ENCODE measurements at regions of chr15 and their contacts with region 1.

Region 1: DNA sequence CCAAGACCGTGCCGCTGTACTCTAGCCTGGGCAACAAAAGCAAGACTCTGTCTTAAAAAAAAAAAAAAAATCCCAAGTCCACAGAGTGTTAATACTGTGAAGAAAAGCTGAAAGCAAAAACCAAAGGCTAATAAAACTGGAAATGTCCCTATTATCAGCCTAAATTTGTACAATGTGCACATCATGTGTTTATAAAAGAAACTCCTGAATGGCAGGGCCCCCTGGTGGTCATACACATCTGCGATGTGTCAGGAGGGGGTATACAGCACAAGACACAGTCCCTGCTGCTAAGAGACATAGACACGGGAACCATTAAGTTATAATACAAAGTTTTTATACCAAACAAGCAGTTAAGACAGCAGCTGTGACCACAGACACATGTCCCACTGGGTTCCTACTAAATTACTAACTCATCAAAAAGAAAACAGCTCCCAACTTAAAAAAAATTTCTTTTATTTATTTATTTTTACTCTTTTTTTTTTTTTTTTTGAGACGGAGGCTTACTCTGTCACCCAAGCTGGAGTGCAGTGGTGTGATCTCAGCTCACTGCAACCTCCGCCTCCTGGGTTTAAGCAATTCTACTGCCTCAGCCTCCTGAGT is 31.0 kb downstream of the IDH2 start:
- DNase-seq: peak; percentile 21
- H3K4me3 ChIP-seq: no peak overlapping the region
- CTCF ChIP-seq: peak; percentile 80

Region 2: DNA sequence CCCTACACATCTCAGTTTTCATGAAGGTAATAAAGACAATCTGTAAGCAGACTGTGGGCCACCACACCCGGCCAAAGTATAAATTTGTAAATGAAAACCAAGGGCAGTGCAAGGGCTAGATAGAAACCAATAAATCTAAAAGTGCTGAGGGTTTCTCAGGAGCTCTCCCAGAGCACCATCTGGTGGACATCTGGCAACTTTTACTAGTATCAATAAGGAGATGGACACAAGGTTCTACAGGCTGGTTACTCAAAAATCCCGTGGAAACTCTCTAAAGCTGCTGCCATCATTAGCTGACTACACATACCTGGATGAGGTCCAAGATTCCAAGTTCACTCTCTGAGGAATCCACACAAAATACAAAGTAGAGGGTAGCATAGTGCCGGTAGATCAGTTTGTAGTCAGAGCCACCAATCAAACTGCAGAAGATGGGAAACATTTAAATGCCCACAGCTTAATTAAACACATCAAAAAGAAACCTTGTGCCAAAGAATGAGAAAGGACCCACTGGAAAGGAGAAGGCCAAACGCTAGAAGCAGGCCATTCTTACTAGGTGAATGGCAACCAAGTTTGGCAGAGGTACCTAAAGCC is 183.0 kb before region 1 on chr15:
- CTCF ChIA-PET with region 1: interaction called, 33 read pairs
- POLR2A ChIA-PET with region 1: no interaction called
- DNase-seq: peak; percentile 69
- H3K4me3 ChIP-seq: no peak overlapping the region
- CTCF ChIP-seq: peak; percentile 53

Region 3: DNA sequence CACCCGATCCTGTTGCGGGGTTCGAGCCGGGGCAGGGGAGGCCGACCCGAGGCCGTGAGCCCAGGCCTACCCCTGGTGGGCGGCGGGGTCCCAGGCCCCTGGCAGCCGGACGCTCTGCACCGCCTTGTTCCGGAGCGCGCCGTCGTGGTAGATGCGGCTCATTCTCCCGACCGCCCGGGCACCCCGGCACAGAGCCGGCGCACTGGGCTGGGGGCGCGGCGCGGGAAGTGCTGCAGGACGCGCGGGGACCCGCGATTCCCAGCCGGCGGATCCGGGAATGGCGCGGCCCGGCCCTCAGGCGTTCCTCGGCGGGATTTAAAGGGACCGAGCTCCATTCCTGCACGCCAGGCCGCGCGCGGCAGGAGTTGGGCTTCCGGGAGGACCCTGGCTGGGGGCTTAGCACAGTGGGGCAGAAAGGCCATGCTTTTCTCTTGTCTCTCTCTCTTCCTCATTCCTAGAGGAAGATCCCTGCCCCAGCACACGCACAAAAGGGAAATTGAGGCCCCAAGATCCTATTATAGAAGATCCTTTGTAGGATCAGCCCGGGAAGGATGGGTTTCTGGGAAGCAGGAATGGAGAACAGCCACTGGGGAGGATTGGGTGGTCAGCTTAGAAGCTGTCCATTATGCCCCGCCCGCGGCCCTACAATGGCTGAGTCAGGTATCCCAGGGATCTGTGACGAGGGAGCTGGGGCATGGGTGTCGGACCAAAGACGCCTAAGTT is 158.5 kb before region 1 on chr15 and contains the start of gene ARPIN:
- CTCF ChIA-PET with region 1: interaction called, 15 read pairs
- POLR2A ChIA-PET with region 1: no interaction called
- DNase-seq: no peak
- H3K4me3 ChIP-seq: peak within 1 kb of the TSS; percentile 71
- CTCF ChIP-seq: no peak

Region 4: DNA sequence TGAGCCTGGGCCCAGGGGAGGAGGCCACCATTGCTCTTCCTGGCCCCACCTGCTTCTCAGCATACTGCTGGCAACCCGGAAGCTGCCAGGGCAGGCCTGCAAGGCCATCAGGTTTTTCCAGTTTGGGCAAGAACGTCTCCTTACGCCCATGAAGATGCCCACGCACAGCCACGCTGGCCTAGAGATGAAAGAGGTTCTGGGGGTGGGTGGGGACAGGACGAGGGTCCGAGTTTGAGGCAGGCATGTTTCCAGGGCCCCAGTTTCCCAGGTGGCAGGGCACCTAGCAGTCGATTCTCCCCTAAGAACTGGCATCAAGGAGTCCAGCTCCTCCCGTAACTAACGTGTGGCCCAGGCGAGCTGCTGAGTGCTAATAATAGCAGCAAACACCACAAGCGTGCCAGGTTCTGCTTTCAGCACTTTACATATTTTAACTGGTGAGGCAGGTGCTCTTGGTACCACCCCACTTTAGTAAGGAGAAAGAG is 24.4 kb before region 1 on chr15:
- CTCF ChIA-PET with region 1: interaction called, 13 read pairs
- POLR2A ChIA-PET with region 1: no interaction called
- DNase-seq: no peak
- H3K4me3 ChIP-seq: no peak overlapping the region
- CTCF ChIP-seq: no peak

Region 5: DNA sequence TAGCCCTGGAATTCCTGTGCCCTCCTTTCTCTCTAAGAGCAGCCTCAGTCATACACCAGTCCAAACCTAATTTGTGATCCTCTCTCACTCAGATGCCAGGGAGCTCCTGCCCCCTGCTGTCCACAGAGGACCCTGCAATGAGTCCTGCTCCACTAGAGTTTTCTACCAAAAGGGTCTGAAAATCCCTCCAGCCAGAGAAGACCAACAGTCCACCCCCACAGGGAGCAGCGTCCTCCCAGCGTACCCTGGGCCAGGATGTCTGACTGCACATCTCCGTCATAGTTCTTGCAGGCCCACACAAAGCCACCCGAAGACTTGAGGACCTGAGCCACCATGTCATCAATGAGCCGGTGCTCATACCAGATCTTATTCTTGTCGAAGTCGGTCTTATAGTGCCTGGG is 15.6 kb after region 1 on chr15:
- CTCF ChIA-PET with region 1: interaction called, 69 read pairs
- POLR2A ChIA-PET with region 1: no interaction called
- DNase-seq: no peak
- H3K4me3 ChIP-seq: no peak overlapping the region
- CTCF ChIP-seq: peak; percentile 74

Measured in AG04449 (cell line).